Activated T-helper 2 cell treated with anti-CD3 and anti-CD28 coated beads, Interferon-gamma antibody, Interleukin-2, Interleukin-4, amounts not matched to agents 10 μg/mL and 5 μg/mL and 100 μg/mL, durations not matched to agents 14 hours and 24 hours and 36 hours (primary cell): ENCODE measurements at regions of chr6 and their contacts with region 1.

Region 1: DNA sequence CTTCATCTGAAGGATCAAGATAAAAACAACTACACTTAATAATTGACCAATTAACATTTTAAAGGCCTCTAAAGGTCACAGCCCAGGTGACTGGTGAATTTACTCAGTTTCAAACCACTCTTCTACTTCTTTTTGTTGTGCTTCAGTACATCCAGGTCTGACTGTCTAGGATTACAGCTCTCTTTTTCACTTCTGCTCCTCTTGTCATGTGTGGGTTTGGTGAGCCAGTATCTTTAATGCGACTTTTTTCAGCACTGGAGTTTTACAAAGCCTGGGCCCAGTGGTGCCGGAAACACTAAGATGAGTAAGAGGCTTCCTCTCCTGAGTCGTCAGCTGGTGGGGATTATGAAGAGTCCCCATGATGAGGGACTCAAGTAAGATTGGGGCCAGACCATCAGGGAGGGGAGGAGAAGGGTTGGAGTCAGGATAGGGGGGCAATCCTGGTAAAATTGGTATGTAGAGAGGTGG is 27.0 kb downstream of the HECA start:
- DNase-seq: peak; percentile 65
- H3K4me3 Mint-ChIP-seq: peak overlapping the region; percentile 65
- H3K27ac Mint-ChIP-seq: peak overlapping the region; percentile 99
- H3K4me1 Mint-ChIP-seq: peaks cover 61% of the 10 kb centered on the region
- H3K27me3 Mint-ChIP-seq: no peaks in the 10 kb centered on the region

Region 2: GRCh38 chr6:138346302-138347195 is 815.3 kb before region 1 on chr6:
- intact Hi-C with region 1: no loop called
- DNase-seq: no peak
- H3K4me3 Mint-ChIP-seq: no peak overlapping the region
- H3K27ac Mint-ChIP-seq: no peak overlapping the region
- H3K4me1 Mint-ChIP-seq: no peaks in the 10 kb centered on the region
- H3K27me3 Mint-ChIP-seq: peaks cover 28% of the 10 kb centered on the region

Region 3: GRCh38 chr6:138931660-138932059 is 230.2 kb before region 1 on chr6:
- intact Hi-C with region 1: no loop called
- DNase-seq: no peak
- H3K4me3 Mint-ChIP-seq: no peak overlapping the region
- H3K27ac Mint-ChIP-seq: no peak overlapping the region
- H3K4me1 Mint-ChIP-seq: peaks cover 11% of the 10 kb centered on the region
- H3K27me3 Mint-ChIP-seq: no peaks in the 10 kb centered on the region

Region 4: DNA sequence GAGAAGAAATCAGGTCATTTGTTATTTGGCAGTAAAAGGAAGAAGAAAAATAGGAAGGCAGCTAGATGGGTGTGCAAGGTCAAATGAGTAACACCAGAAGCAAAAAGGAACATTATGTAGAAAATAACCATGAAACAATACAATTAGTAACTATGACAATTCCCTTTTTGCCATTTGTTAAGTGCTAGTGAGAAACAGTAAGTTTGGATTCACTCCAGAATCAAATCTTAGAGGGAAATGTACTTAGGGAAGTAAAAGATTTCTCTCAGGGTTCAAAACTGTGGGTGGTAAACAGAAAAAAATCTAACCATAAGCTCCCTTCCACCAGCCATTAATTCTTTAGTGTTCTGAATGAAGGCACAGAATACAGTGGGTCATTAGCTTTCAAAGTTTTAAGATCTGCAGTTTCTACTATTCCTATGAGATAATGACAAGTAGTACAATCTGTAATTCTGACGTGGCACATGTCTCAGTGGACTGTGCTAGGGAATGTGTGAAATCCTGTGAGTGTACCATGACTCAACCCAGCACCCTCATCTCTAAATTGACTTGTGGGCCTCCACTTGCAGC is 190.9 kb before region 1 on chr6:
- intact Hi-C with region 1: loop called (anchors 5 kb)
- DNase-seq: no peak
- H3K4me3 Mint-ChIP-seq: no peak overlapping the region
- H3K27ac Mint-ChIP-seq: peak overlapping the region; percentile 5
- H3K4me1 Mint-ChIP-seq: peaks cover 40% of the 10 kb centered on the region
- H3K27me3 Mint-ChIP-seq: no peaks in the 10 kb centered on the region

Region 5: DNA sequence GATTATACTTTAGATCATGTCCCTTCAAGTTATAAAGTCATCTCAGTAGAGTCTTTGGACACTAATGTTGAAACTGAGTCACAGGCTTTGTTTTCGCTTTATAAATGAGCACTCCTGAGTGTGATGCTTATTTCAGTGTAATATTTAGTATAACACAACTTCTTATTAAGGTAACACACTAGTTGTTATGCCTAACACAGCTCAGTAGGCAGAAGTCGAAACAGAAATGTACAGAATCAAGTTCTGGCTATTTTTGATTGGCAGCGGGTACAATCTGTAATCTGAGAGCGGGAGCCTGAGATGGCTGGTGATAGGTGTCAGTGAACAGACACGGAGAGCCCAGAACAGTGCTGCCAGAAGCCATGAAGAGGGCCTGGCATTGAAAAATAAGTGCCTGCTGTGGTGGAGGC is 15.5 kb before region 1 on chr6:
- intact Hi-C with region 1: loop called (anchors 1 kb)
- DNase-seq: no peak
- H3K4me3 Mint-ChIP-seq: peak overlapping the region; percentile 56
- H3K27ac Mint-ChIP-seq: peak overlapping the region; percentile 87
- H3K4me1 Mint-ChIP-seq: peaks cover 84% of the 10 kb centered on the region
- H3K27me3 Mint-ChIP-seq: no peaks in the 10 kb centered on the region

Region 6: DNA sequence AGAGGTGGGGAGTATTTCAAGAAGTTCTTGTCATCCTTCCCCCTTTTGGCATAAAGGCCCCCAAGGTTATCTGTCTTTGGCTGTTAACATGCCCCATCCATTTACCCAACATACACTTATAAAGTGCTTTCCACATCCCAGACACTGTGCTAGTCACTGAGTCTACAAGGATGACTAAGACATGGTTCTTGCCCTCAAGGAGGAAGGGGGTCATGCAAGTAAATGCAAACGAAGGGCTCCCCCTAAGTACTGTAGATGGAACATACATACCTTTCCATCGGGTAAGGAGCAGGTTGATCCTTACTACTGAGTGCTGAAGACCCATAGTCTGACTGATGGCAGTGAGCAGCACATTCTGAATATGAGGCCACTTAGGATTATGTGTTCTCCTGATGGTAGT is 11.3 kb after region 1 on chr6:
- intact Hi-C with region 1: loop called (anchors 1 kb)
- DNase-seq: no peak
- H3K4me3 Mint-ChIP-seq: no peak overlapping the region
- H3K27ac Mint-ChIP-seq: peak overlapping the region; percentile 70
- H3K4me1 Mint-ChIP-seq: peaks cover 73% of the 10 kb centered on the region
- H3K27me3 Mint-ChIP-seq: no peaks in the 10 kb centered on the region

Region 7: GRCh38 chr6:139262519-139263300 is 100.9 kb after region 1 on chr6:
- intact Hi-C with region 1: loop called (anchors 1 kb)
- DNase-seq: no peak
- H3K4me3 Mint-ChIP-seq: peak overlapping the region; percentile 69
- H3K27ac Mint-ChIP-seq: peak overlapping the region; percentile 85
- H3K4me1 Mint-ChIP-seq: peaks cover 17% of the 10 kb centered on the region
- H3K27me3 Mint-ChIP-seq: no peaks in the 10 kb centered on the region

Region 8: GRCh38 chr6:140193269-140193668 is 1031.4 kb after region 1 on chr6:
- intact Hi-C with region 1: no loop called
- DNase-seq: no peak
- H3K4me3 Mint-ChIP-seq: no peak overlapping the region
- H3K27ac Mint-ChIP-seq: no peak overlapping the region
- H3K4me1 Mint-ChIP-seq: no peaks in the 10 kb centered on the region
- H3K27me3 Mint-ChIP-seq: no peaks in the 10 kb centered on the region